B cell (primary cell): ENCODE measurements at regions of chr1 and their contacts with region 1.

Region 1: DNA sequence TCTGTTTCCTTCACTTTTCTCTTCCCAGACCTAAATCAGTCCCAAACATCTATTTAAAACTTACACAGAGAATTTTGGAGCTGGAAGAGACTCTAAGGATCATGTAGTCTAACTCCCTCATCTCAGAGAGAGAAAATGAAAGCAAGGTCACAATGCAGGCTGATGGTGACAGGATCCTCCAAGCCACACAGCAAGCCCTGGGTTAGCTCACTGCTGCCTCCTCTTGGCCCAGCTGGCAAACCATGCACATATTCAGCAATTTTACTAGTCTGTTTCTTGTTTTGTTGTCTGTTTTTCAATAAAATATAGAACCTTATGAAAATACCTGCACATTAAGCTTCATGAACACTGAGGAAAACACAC is 27.7 kb upstream of the LY9 start:
- DNase-seq: peak; percentile 87
- ATAC-seq: peak; percentile 98
- H3K4me3 ChIP-seq: peak overlapping the region in 4 of 5 experiments; percentile 20 to 64 (median 43)
- H3K4me3 Mint-ChIP-seq: peak overlapping the region; percentile 83
- H3K27ac ChIP-seq: peak overlapping the region; percentile 39 to 68
- H3K27ac Mint-ChIP-seq: peak overlapping the region; percentile 85
- H3K4me1 ChIP-seq: peaks cover 11 to 18% of the 10 kb centered on the region in 2 donors
- H3K4me1 Mint-ChIP-seq: peaks cover 29% of the 10 kb centered on the region
- H3K27me3 ChIP-seq: no peaks in the 10 kb centered on the region
- H3K27me3 Mint-ChIP-seq: no peaks in the 10 kb centered on the region
- CTCF ChIP-seq: peak; percentile 74

Region 2: GRCh38 chr1:160451119-160451858 is 317.0 kb before region 1 on chr1:
- CTCF ChIA-PET with region 1: no interaction called
- POLR2A ChIA-PET with region 1: no interaction called
- intact Hi-C with region 1: no loop called
- DNase-seq: no peak
- ATAC-seq: peak; percentile 50
- H3K4me3 ChIP-seq: peak overlapping the region in 1 of 5 experiments; percentile 6
- H3K4me3 Mint-ChIP-seq: peak overlapping the region; percentile 62
- H3K27ac ChIP-seq: peak overlapping the region; percentile 8 to 12
- H3K27ac Mint-ChIP-seq: peak overlapping the region; percentile 81
- H3K4me1 ChIP-seq: peaks cover 44 to 49% of the 10 kb centered on the region in 2 donors
- H3K4me1 Mint-ChIP-seq: peaks cover 63% of the 10 kb centered on the region
- H3K27me3 ChIP-seq: no peaks in the 10 kb centered on the region
- H3K27me3 Mint-ChIP-seq: no peaks in the 10 kb centered on the region
- CTCF ChIP-seq: no peak

Region 3: DNA sequence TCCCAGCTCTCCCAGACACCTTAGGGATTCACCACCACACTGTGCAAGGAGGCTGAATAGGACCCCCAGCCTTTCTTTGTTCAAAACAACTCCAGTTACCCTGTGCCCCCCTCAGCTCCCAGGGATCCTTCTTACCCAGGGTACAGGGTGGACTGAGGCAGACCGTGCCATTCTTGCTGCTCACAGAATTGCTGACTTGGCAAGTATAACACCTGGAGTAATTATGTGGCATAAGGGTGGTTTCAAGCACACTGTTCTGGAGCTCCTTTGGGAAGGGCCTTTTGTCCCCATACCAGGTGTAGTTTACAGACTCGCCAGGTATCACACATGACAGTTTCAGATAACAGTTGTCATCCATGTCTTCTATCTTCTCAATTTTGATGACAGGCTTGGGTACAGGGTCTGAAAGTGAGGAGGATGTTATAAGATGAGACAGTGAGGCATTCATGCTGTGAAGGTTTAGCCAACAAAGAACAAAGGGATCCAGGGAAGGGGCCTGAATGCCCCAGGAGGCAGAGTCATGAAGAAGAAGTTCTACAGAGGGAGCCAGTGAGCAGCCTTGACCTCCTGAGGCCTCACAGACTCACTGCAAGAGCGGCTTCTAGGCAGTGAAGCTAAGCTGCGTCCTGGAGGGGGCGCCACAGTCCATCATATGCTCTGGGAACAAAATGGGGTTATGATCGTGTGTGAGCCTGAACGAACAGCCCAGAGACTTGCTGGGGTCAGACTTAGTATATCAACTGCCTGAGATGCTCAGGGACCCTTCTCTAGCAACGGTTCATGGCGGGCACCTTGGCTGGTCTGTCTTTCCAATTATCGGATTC is 87.0 kb before region 1 on chr1:
- CTCF ChIA-PET with region 1: interaction called, 50 read pairs
- POLR2A ChIA-PET with region 1: interaction called, 3 read pairs
- intact Hi-C with region 1: loop called (anchors 1 kb)
- DNase-seq: peak; percentile 89
- ATAC-seq: peak; percentile 93
- H3K4me3 ChIP-seq: no peak overlapping the region
- H3K4me3 Mint-ChIP-seq: no peak overlapping the region
- H3K27ac ChIP-seq: peak overlapping the region in 1 of 2 donors; percentile 82
- H3K27ac Mint-ChIP-seq: peak overlapping the region; percentile 72
- H3K4me1 ChIP-seq: peaks cover 38 to 45% of the 10 kb centered on the region in 2 donors
- H3K4me1 Mint-ChIP-seq: peaks cover 51% of the 10 kb centered on the region
- H3K27me3 ChIP-seq: no peaks in the 10 kb centered on the region
- H3K27me3 Mint-ChIP-seq: no peaks in the 10 kb centered on the region
- CTCF ChIP-seq: peak; percentile 92

Region 4: GRCh38 chr1:160789702-160790611 is 21.7 kb after region 1 on chr1:
- CTCF ChIA-PET with region 1: interaction called, 150 read pairs
- POLR2A ChIA-PET with region 1: interaction called, 3 read pairs
- intact Hi-C with region 1: no loop called
- DNase-seq: peak; percentile 98
- ATAC-seq: peak; percentile 77
- H3K4me3 ChIP-seq: peak overlapping the region in 1 of 5 experiments; percentile 19
- H3K4me3 Mint-ChIP-seq: peak overlapping the region; percentile 68
- H3K27ac ChIP-seq: peak overlapping the region; percentile 99
- H3K27ac Mint-ChIP-seq: peak overlapping the region; percentile 98
- H3K4me1 ChIP-seq: peaks cover 28 to 34% of the 10 kb centered on the region in 2 donors
- H3K4me1 Mint-ChIP-seq: peaks cover 42% of the 10 kb centered on the region
- H3K27me3 ChIP-seq: no peaks in the 10 kb centered on the region
- H3K27me3 Mint-ChIP-seq: no peaks in the 10 kb centered on the region
- CTCF ChIP-seq: no peak

Region 5: DNA sequence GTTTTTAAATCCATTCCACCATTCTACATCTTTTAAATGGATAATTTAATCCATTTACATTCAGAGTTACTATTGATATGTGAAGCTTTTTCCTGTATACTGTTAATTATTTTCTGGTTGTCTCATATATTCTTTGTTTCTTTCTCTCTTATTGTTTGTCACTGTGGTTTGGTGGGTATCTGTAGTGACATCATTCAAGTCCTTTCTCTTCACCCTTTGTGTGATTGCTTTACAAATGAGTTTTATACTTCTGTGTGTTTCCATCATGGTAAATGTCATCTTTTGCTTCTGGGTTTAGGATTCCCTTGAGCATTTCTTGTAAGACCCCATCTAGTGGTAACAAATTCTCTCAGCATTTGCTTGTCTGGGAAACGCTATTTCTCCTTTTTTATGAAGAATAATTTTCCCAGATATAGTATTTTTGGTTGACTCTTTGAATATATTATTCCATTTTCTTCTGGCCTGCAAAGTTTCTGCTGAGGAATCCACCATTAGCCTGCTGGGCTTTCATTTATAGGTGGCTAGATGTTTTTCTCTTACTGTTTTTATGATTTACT is 37.9 kb after region 1 on chr1:
- CTCF ChIA-PET with region 1: interaction called, 150 read pairs
- POLR2A ChIA-PET with region 1: no interaction called
- intact Hi-C with region 1: no loop called
- DNase-seq: no peak
- ATAC-seq: no peak
- H3K4me3 ChIP-seq: no peak overlapping the region
- H3K4me3 Mint-ChIP-seq: peak overlapping the region; percentile 74
- H3K27ac ChIP-seq: peak overlapping the region in 1 of 2 donors; percentile 20
- H3K27ac Mint-ChIP-seq: peak overlapping the region; percentile 60
- H3K4me1 ChIP-seq: peaks cover 9 to 13% of the 10 kb centered on the region in 2 donors
- H3K4me1 Mint-ChIP-seq: peaks cover 74% of the 10 kb centered on the region
- H3K27me3 ChIP-seq: no peaks in the 10 kb centered on the region
- H3K27me3 Mint-ChIP-seq: no peaks in the 10 kb centered on the region
- CTCF ChIP-seq: no peak

Region 6: GRCh38 chr1:160819186-160819585 is 50.9 kb after region 1 on chr1:
- CTCF ChIA-PET with region 1: no interaction called
- POLR2A ChIA-PET with region 1: no interaction called
- intact Hi-C with region 1: no loop called
- DNase-seq: peak; percentile 25
- ATAC-seq: no peak
- H3K4me3 ChIP-seq: no peak overlapping the region
- H3K4me3 Mint-ChIP-seq: no peak overlapping the region
- H3K27ac ChIP-seq: no peak overlapping the region
- H3K27ac Mint-ChIP-seq: peak overlapping the region; percentile 17
- H3K4me1 ChIP-seq: no peaks in the 10 kb centered on the region
- H3K4me1 Mint-ChIP-seq: peaks cover 2% of the 10 kb centered on the region
- H3K27me3 ChIP-seq: no peaks in the 10 kb centered on the region
- H3K27me3 Mint-ChIP-seq: no peaks in the 10 kb centered on the region
- CTCF ChIP-seq: no peak

Region 7: DNA sequence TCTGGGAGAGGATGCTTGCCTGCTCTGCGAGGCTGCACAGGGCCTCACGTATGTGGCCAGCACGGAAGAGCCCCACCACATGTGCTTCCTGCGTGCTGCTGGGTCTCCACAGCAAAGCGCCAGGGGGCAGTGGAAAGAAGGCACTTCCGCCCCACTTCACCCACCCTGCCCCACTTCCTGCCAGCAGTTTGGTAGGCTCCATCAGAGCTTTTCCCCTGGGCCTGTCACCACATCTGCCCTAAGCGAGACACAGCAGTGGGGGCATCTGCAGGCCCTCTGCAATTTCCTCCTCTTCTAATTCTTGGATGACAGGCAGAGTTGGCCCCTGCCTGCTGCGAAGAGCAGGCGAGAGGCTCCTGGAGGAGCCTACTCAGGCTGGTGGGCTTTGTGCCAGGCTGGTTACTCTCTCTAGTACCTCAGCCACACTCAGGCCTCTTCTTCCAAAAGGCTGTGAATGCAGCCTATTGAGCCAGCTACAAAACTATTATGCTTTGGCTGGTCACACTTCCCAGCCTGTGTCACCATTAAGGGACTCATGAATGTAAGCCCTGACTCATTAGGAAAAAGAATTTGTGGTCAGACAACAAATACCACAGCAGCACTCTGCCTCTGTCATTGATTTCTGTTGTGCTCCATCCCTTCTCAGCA is 69.4 kb after region 1 on chr1:
- CTCF ChIA-PET with region 1: interaction called, 20 read pairs
- POLR2A ChIA-PET with region 1: no interaction called
- intact Hi-C with region 1: no loop called
- DNase-seq: peak; percentile 91
- ATAC-seq: peak; percentile 97
- H3K4me3 ChIP-seq: peak overlapping the region in 1 of 5 experiments; percentile 30
- H3K4me3 Mint-ChIP-seq: peak overlapping the region; percentile 41
- H3K27ac ChIP-seq: peak overlapping the region; percentile 71 to 72
- H3K27ac Mint-ChIP-seq: peak overlapping the region; percentile 90
- H3K4me1 ChIP-seq: peaks cover 33 to 34% of the 10 kb centered on the region in 2 donors
- H3K4me1 Mint-ChIP-seq: peaks cover 41% of the 10 kb centered on the region
- H3K27me3 ChIP-seq: no peaks in the 10 kb centered on the region
- H3K27me3 Mint-ChIP-seq: no peaks in the 10 kb centered on the region
- CTCF ChIP-seq: peak; percentile 65